ENCODE measurements at regions of chr5 and their contacts with region 1.

Region 1: GRCh38 chr5:8869932-8870331 is 675.9 kb downstream of the SEMA5A start:
- DNase-seq: no peak
- H3K4me3 Mint-ChIP-seq: no peak overlapping the region
- H3K27ac Mint-ChIP-seq: no peak overlapping the region
- H3K4me1 Mint-ChIP-seq: no peaks in the 10 kb centered on the region
- H3K27me3 Mint-ChIP-seq: no peaks in the 10 kb centered on the region
- CTCF ChIP-seq: no peak

Region 2: GRCh38 chr5:8660133-8660893 is 209.6 kb before region 1 on chr5:
- CTCF ChIA-PET with region 1: no interaction called
- intact Hi-C with region 1: no loop called
- DNase-seq: no peak
- H3K4me3 Mint-ChIP-seq: no peak overlapping the region
- H3K27ac Mint-ChIP-seq: no peak overlapping the region
- H3K4me1 Mint-ChIP-seq: no peaks in the 10 kb centered on the region
- H3K27me3 Mint-ChIP-seq: no peaks in the 10 kb centered on the region
- CTCF ChIP-seq: no peak

Region 3: GRCh38 chr5:8993031-8993430 is 123.1 kb after region 1 on chr5:
- CTCF ChIA-PET with region 1: no interaction called
- intact Hi-C with region 1: loop called (anchors 5 kb)
- DNase-seq: no peak
- H3K4me3 Mint-ChIP-seq: no peak overlapping the region
- H3K27ac Mint-ChIP-seq: no peak overlapping the region
- H3K4me1 Mint-ChIP-seq: no peaks in the 10 kb centered on the region
- H3K27me3 Mint-ChIP-seq: no peaks in the 10 kb centered on the region
- CTCF ChIP-seq: no peak

Region 4: GRCh38 chr5:9125852-9126251 is 255.9 kb after region 1 on chr5:
- CTCF ChIA-PET with region 1: no interaction called
- intact Hi-C with region 1: no loop called
- DNase-seq: no peak
- H3K4me3 Mint-ChIP-seq: no peak overlapping the region
- H3K27ac Mint-ChIP-seq: no peak overlapping the region
- H3K4me1 Mint-ChIP-seq: no peaks in the 10 kb centered on the region
- H3K27me3 Mint-ChIP-seq: no peaks in the 10 kb centered on the region
- CTCF ChIP-seq: no peak

Measured in Calu3 (cell line).